Activated CD4-positive, alpha-beta memory T cell treated with anti-CD3 and anti-CD28 coated beads, Interleukin-2, amount 10 ng/mL, durations not matched to agents 7 days and 5 days (primary cell): ENCODE measurements at regions of chr20 and their contacts with region 1.

Region 1: GRCh38 chr20:57391074-57391554 is at the start of gene RBM38:
- DNase-seq: peak; percentile 83
- H3K4me3 Mint-ChIP-seq: peak within 1 kb of the TSS; percentile 98
- H3K27ac Mint-ChIP-seq: peak within 1 kb of the TSS; percentile 96
- H3K4me1 Mint-ChIP-seq: peaks cover 51% of the 10 kb centered on the region
- H3K27me3 Mint-ChIP-seq: no peaks in the 10 kb centered on the region
- total RNA-seq, gene RBM38: 116 to 119 TPM

Region 2: GRCh38 chr20:57006411-57007170 is 384.5 kb before region 1 on chr20:
- CTCF ChIA-PET with region 1: no interaction called
- POLR2A ChIA-PET with region 1: no interaction called
- DNase-seq: no peak
- H3K4me3 Mint-ChIP-seq: no peak overlapping the region
- H3K27ac Mint-ChIP-seq: no peak overlapping the region
- H3K4me1 Mint-ChIP-seq: no peaks in the 10 kb centered on the region
- H3K27me3 Mint-ChIP-seq: peaks cover 11% of the 10 kb centered on the region

Region 3: DNA sequence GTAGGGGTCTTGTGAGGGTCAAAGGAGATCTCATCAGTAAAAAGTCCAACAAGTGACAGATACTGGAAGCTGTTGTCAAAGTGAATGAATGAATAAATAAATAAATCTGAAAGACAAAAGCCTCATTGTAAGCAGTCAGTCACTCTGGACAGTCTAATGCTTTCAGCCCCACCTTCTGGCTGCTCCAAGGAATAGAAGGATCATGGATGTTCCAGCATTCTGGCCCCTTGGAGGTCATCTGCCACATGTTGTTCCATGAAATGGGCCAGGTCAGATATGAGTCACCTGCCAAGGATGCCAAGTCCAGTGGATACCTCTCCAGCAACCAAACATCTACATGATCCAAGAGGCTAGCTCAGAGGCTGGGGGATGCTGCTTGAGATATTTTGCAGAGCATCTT is 310.3 kb before region 1 on chr20:
- CTCF ChIA-PET with region 1: no interaction called
- POLR2A ChIA-PET with region 1: no interaction called
- DNase-seq: no peak
- H3K4me3 Mint-ChIP-seq: no peak overlapping the region
- H3K27ac Mint-ChIP-seq: no peak overlapping the region
- H3K4me1 Mint-ChIP-seq: no peaks in the 10 kb centered on the region
- H3K27me3 Mint-ChIP-seq: peaks cover 2% of the 10 kb centered on the region

Region 4: DNA sequence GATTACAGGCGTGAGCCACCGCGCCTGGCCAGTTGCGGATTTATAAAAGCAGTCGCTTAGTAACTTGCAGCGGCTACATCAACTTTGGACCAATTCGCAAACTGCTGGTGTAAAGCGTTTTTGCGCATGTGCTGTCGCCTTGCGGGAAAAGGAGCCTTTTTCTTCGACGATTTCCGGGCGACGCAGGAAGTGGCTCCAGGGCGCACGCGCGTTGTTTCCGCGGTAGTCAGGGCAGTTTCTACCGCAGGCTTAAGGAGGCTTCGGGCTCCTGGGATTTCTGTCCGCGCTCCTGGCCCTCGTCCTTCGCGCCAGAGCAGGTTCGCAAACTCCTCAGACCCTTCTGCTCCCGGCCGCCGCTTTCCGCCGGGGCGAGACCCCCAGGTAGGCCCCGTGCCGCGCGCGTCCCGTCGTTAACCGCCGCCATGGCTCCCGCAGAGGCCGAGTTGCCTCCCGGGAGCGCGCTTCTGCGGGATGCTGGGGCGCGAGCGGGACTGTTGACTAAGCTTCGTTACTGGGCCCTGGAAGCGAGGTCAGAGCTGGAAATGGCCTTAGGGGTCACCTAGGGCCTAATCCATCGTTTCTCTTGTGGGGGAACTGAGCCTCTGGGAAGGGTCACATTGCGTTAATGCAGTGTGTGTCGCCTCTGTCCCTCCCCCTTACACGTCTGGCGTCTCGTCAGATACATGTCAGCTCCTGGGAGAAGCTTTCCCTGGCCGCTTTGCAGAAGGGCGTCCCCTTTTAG is 39.9 kb before region 1 on chr20 and contains the start of gene RAE1:
- CTCF ChIA-PET with region 1: no interaction called
- POLR2A ChIA-PET with region 1: interaction called, 20 read pairs
- DNase-seq: peak; percentile 91
- H3K4me3 Mint-ChIP-seq: peak within 1 kb of the TSS; percentile 89
- H3K27ac Mint-ChIP-seq: peak within 1 kb of the TSS; percentile 75
- H3K4me1 Mint-ChIP-seq: peaks cover 20% of the 10 kb centered on the region
- H3K27me3 Mint-ChIP-seq: peaks cover 7% of the 10 kb centered on the region
- total RNA-seq, gene RAE1: 33.8 to 35.3 TPM

Region 5: DNA sequence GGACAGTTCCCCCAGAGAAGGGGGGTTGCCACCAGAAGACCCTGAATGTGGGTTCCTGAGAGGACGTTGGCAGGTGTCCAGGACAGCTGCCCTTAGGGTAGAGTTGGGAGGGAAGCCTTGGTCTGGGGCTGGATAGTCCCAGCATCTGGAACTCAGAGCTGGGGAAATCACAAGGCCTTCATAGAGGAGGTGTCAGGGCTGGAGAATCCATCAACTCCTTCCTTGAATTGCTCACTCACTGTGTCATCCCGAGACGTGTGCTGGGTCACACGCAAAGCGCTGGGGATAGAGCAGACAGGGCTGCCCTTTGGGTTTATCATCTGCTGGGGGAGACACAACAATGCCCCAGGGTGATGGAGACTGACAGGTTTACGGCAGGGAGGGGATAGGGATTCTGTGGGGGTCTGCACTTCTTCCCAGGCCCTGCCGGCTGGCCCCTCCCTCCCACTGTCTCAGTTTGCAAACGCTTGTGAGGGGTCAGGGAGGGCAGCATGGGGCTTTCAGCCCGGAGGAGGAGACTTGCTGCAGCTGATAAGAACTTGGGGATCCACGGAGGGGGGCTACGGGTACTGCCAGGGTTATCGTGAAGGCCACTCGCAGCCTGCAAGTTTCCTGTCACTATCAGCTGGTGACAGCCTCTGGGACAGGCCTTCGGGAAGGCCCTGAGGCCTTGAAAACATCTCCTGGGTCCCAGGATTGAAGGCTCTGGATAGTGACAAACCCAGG is 18.7 kb after region 1 on chr20:
- CTCF ChIA-PET with region 1: no interaction called
- POLR2A ChIA-PET with region 1: interaction called, 18 read pairs
- DNase-seq: no peak
- H3K4me3 Mint-ChIP-seq: no peak overlapping the region
- H3K27ac Mint-ChIP-seq: no peak overlapping the region
- H3K4me1 Mint-ChIP-seq: peaks cover 20% of the 10 kb centered on the region
- H3K27me3 Mint-ChIP-seq: no peaks in the 10 kb centered on the region

Region 6: DNA sequence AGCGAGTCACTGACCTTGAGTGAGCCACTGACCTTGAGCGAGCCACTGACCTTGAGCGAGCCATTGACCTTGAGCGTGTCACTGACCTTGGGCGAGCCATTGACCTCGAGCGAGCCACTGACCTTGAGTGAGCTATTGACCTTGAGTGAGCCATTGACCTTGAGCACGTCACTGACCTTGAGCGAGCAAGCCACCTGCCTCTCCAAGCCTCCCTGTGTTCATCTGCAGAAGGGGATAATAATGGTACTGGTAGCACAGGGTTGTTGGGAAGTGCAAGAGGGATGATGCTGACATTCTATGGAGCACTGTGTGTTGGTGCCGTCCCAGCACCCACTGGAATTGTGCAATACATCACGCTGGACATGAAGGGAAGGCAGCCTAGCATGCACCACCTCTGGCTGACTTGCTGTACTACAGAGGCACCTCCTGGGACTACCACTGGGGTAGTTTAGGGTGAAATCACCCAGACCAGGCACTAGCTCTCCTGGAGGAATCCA is 73.6 kb after region 1 on chr20:
- CTCF ChIA-PET with region 1: no interaction called
- POLR2A ChIA-PET with region 1: no interaction called
- DNase-seq: no peak
- H3K4me3 Mint-ChIP-seq: no peak overlapping the region
- H3K27ac Mint-ChIP-seq: no peak overlapping the region
- H3K4me1 Mint-ChIP-seq: no peaks in the 10 kb centered on the region
- H3K27me3 Mint-ChIP-seq: peaks cover 3% of the 10 kb centered on the region

Region 7: GRCh38 chr20:57540890-57541580 is 149.9 kb after region 1 on chr20:
- CTCF ChIA-PET with region 1: no interaction called
- POLR2A ChIA-PET with region 1: no interaction called
- DNase-seq: no peak
- H3K4me3 Mint-ChIP-seq: no peak overlapping the region
- H3K27ac Mint-ChIP-seq: no peak overlapping the region
- H3K4me1 Mint-ChIP-seq: no peaks in the 10 kb centered on the region
- H3K27me3 Mint-ChIP-seq: peaks cover 45% of the 10 kb centered on the region